HEK293T (cell line): ENCODE measurements at regions of chr4 and their contacts with region 1.

Region 1: GRCh38 chr4:141294306-141294705 is 73.6 kb downstream of the ZNF330 start:
- DNase-seq: no peak

Region 2: DNA sequence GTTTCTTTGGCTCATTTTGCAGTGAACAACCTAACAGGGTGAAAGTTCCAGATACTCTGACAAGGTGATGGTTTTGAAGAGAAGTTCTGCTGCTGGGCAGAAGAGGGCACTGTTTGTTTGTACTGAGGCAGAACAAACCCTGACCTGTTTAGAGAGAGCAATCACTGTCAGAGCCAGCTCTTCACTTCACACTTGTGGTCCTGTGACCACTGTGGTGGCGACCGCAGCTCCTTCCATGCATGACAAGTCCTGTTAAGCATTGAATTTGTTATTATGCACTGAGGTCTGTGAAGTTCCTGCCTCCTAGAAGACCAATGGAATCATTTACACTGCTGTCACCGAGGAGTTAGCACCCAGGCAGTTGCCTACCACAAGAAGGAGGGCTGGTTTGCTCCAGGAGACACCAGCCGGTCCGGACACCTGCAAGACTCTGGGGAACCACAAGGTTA is 13.0 kb after region 1 on chr4:
- CTCF ChIA-PET with region 1: interaction called, 10 read pairs
- POLR2A ChIA-PET with region 1: no interaction called
- DNase-seq: peak; percentile 66